Lower leg skin (tissue), 4 donors: ENCODE measurements at regions of chr7 and their contacts with region 1.

Region 1: GRCh38 chr7:90061077-90061476 is 93.2 kb upstream of the STEAP1 start:
- DNase-seq: no peak
- H3K4me3 ChIP-seq: no peak overlapping the region
- CTCF ChIP-seq: no peak
- POLR2A ChIP-seq: no peak

Region 2: DNA sequence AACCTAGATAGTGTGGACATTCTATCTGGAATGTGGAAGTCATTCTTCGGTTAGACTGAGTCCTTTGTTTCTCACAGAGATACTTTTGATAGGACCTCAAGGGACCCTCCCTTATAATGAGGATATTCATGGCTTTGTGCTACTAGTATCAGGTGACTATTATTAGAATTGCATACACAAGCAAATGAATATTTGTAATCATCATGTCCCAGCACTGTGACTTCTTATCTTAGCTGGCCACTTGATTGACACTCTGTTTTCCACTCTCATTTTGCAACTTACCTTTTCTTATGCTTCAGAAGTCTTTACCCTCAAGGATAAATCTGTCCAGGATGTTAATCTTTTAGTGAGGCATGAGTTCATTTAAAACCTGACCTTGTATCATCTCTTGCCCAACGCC is 934.9 kb after region 1 on chr7:
- intact Hi-C with region 1: loop called (anchors 5 kb)
- DNase-seq: no peak
- H3K4me3 ChIP-seq: no peak overlapping the region
- CTCF ChIP-seq: no peak
- POLR2A ChIP-seq: no peak